Activated CD4-positive, alpha-beta T cell treated with anti-CD3 and anti-CD28 coated beads, Interleukin-2, amount 10 ng/mL, durations not matched to agents 24 days and 14 days (primary cell): ENCODE measurements at regions of chr1 and their contacts with region 1.

Region 1: GRCh38 chr1:218164111-218164929 is 120.8 kb upstream of the RRP15 start:
- DNase-seq: peak; percentile 58
- H3K4me3 Mint-ChIP-seq: peak overlapping the region; percentile 74
- H3K27ac Mint-ChIP-seq: peak overlapping the region; percentile 23
- H3K4me1 Mint-ChIP-seq: peaks cover 16% of the 10 kb centered on the region
- H3K27me3 Mint-ChIP-seq: peaks cover 55% of the 10 kb centered on the region

Region 2: DNA sequence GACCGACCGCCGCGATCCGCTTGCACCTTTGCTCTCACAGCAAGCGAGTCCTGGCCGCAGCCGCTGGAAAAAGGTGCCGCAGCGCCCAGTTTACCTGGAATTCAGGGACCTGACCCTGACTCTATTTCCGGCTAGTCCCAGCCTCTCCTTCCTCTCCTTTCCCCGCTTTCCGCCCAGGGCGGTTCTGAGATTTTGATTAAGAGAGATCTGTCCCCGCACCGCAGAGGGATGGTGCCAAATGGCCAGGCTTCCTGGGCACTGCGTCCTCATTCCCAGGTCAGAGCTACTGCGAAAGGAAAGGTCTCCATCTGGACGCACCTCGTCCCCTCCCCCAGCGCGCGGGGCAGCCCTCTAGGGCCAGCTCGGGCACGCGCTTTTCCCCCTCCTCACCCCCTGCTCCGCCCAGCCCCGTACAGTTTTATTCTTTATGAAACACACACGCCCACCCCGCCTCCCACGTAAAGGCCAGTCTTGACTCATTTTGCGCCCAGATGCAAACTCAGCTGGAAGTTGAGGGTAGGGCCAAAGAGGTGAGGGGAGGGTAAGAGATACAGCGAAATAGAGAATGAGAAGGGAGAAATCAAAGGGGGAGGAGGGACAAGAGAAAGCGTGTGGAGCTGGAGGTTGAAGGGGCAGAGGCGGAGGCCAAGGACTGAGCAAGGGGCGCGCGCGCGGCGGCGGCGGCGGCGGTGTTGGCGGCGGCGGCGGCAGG is 1029.3 kb before region 1 on chr1:
- intact Hi-C with region 1: loop called (anchors 5 kb)
- DNase-seq: no peak
- H3K4me3 Mint-ChIP-seq: peak overlapping the region; percentile 15
- H3K27ac Mint-ChIP-seq: peak overlapping the region; percentile 64
- H3K4me1 Mint-ChIP-seq: peaks cover 2% of the 10 kb centered on the region
- H3K27me3 Mint-ChIP-seq: peaks cover 59% of the 10 kb centered on the region

Region 3: DNA sequence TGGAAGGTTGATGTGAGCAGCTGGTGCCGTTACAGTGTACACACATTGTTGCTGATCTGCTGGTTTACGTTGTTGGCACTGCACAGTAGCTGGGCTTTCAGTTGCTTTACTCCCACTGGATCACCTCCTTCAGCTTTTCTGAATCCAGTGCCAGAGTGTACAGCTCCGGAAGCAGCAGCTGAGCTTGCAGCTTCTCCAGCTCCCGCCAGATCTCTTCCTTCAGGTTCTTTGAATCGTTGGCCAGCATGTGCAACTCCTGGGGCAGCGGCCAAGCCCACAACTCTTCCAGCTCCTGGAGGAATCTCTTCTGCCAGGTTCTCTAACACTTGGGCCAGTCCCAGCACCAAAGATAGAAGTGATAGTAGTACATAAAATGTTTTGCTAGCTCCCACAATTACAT is 28.9 kb before region 1 on chr1:
- intact Hi-C with region 1: no loop called
- DNase-seq: no peak
- H3K4me3 Mint-ChIP-seq: no peak overlapping the region
- H3K27ac Mint-ChIP-seq: no peak overlapping the region
- H3K4me1 Mint-ChIP-seq: no peaks in the 10 kb centered on the region
- H3K27me3 Mint-ChIP-seq: no peaks in the 10 kb centered on the region

Region 4: DNA sequence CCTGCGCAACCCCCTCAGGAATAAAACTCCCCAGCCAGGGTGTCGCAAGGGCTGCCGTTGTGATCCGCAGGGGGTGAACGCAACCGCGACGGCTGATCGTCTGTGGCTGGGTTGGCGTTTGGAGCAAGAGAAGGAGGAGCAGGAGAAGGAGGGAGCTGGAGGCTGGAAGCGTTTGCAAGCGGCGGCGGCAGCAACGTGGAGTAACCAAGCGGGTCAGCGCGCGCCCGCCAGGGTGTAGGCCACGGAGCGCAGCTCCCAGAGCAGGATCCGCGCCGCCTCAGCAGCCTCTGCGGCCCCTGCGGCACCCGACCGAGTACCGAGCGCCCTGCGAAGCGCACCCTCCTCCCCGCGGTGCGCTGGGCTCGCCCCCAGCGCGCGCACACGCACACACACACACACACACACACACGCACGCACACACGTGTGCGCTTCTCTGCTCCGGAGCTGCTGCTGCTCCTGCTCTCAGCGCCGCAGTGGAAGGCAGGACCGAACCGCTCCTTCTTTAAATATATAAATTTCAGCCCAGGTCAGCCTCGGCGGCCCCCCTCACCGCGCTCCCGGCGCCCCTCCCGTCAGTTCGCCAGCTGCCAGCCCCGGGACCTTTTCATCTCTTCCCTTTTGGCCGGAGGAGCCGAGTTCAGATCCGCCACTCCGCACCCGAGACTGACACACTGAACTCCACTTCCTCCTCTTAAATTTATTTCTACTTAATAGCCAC is 181.5 kb after region 1 on chr1:
- intact Hi-C with region 1: loop called (anchors 2 kb)
- DNase-seq: peak; percentile 66
- H3K4me3 Mint-ChIP-seq: no peak overlapping the region
- H3K27ac Mint-ChIP-seq: no peak overlapping the region
- H3K4me1 Mint-ChIP-seq: peaks cover 14% of the 10 kb centered on the region
- H3K27me3 Mint-ChIP-seq: peaks cover 52% of the 10 kb centered on the region